ENCODE measurements at regions of chr16 and their contacts with region 1.

Region 1: DNA sequence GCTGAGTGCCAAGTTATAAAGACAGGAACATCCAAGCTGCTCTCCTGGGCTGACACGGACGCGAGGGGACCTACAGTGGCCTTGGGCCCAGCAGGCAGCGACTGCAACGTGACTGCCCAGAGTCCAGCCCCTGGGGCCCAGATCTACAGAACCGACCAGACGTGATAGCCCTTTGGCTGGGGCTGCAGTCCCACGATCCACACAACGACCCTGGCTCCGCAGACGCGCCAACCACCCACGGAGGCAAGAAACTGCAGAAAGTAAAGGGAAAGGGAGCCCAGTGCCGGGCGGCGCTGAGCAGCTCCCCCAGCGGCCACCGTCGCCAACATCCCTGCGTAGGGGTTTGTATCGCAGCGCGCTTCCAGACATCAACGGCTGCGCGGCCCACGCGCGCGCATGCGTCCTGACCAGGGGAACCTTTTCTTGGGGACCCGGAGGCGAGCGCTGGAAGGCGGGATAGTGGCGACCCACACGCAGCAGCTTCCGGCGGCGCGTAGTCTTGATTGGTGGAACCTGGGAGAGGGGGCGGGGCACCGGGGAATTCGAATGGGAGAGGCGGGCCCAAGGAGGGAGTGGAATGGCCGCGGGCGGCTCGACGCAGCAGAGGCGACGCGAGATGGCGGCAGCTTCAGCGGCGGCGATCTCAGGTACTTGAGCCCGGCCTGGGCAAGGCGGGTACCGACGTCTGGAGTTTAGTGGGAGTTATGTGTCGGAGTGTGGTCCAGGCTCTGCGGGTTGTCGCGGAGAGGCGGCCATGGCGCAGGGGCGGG is at the start of gene KIF22:
- DNase-seq: peak; percentile 99 to 100 (median 100)
- H3K4me3 ChIP-seq: peak within 1 kb of the TSS; percentile 95
- H3K4me3 Mint-ChIP-seq: peak within 1 kb of the TSS; percentile 94 to 99 (median 99)
- H3K27ac ChIP-seq: peak within 1 kb of the TSS; percentile 85
- H3K27ac Mint-ChIP-seq: peak within 1 kb of the TSS; percentile 94 to 99 (median 98)
- H3K4me1 ChIP-seq: peaks cover 43% of the 10 kb centered on the region
- H3K4me1 Mint-ChIP-seq: peaks cover 40 to 61% (median 47%) of the 10 kb centered on the region in 3 donors
- H3K27me3 ChIP-seq: no peaks in the 10 kb centered on the region
- H3K27me3 Mint-ChIP-seq: peaks cover 0 to 4% of the 10 kb centered on the region in 2 donors
- total RNA-seq, gene KIF22: 118 to 131 TPM

Region 2: DNA sequence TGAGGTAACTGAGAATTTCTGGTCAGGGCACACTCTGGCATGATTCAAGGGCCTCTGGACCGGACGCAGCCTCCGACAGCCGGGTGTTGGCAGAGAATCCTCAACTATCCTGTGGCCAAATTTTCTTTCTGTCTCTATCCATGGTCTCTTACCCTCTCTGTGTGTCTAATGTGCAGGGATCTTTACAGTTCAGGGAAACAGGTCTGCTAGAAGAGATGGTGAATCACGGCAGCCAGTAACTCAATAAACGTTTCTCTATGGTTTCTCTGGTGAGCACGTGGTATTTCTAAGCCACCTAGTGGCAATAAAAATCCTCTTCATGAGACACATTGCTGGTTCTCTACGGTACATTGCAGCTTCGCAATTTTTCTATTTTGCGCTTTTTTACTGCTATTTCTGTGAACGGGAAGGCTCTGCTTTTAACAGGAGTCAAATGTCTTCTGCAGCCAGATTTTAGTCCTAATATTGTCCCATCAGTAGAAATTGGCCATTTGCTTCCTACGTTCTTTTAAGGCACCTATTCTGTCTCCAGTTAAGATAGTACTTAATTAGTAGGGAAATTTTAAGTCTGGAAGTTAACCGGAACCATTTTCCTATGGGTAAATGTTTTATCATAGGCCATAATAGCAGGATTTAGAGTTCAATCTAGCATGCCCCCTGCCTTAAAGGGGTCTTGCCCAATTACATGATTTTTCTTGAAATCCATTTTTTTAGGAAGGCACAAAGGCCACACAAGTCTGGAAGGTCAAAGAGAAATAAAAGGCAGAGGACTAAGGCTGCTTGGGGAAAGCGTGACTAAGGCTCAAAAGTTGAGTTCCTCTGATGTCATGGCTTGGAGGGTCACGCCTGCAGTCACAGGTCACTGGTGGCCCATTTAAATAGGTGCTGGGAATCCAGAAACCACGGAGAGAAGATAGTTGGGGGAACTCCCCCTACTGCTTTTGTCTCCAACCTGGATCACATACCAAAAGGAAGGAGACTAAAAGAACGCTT is 79.8 kb before region 1 on chr16:
- CTCF ChIA-PET with region 1: interaction called, 12 read pairs
- POLR2A ChIA-PET with region 1: interaction called, 4 read pairs
- DNase-seq: peak in 3 of 5 donors; percentile 57 to 65 (median 58)
- H3K4me3 ChIP-seq: no peak overlapping the region
- H3K4me3 Mint-ChIP-seq: no peak overlapping the region
- H3K27ac ChIP-seq: no peak overlapping the region
- H3K27ac Mint-ChIP-seq: peak overlapping the region in 6 of 8 donors; percentile 7 to 93 (median 84)
- H3K4me1 ChIP-seq: peaks cover 11% of the 10 kb centered on the region
- H3K4me1 Mint-ChIP-seq: peaks cover 12 to 17% (median 14%) of the 10 kb centered on the region in 3 donors
- H3K27me3 ChIP-seq: no peaks in the 10 kb centered on the region
- H3K27me3 Mint-ChIP-seq: peaks cover 0 to 1% of the 10 kb centered on the region in 2 donors

Region 3: DNA sequence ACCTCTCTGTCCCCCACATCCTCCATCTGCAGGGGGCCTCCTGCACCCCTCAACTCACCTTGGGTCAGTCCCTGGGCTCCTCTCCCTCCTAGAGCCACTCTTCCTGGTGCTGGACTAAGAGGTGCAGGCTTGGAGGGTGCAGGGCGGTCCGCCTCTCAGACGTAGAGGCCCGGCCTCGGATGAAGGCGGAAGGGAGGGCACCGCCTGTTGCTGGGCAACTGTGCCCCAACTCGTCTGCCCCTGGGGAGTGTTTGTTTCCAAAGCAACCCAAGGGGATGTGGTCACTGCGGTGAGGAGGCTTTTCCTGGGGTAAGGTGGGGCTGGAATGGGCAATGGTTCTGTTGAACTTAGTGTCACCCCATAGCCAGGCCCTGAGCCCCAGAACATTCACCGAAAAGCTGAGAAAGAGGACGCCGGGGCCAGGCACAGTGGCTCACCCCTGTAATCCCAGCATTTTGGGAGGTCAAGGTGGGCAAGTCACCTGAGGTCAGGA is 44.5 kb before region 1 on chr16 and contains the start of gene C16orf54:
- CTCF ChIA-PET with region 1: interaction called, 16 read pairs
- POLR2A ChIA-PET with region 1: interaction called, 28 read pairs
- DNase-seq: peak; percentile 89 to 99 (median 98)
- H3K4me3 ChIP-seq: peak within 1 kb of the TSS; percentile 86
- H3K4me3 Mint-ChIP-seq: peak within 1 kb of the TSS; percentile 96 to 100 (median 99)
- H3K27ac ChIP-seq: peak within 1 kb of the TSS; percentile 97
- H3K27ac Mint-ChIP-seq: peak within 1 kb of the TSS; percentile 98 to 100 (median 100)
- H3K4me1 ChIP-seq: peaks cover 65% of the 10 kb centered on the region
- H3K4me1 Mint-ChIP-seq: peaks cover 57 to 70% (median 61%) of the 10 kb centered on the region in 3 donors
- H3K27me3 ChIP-seq: no peaks in the 10 kb centered on the region
- H3K27me3 Mint-ChIP-seq: peaks cover 0 to 5% of the 10 kb centered on the region in 2 donors
- total RNA-seq, gene C16orf54: 32.3 to 33.3 TPM

Region 4: DNA sequence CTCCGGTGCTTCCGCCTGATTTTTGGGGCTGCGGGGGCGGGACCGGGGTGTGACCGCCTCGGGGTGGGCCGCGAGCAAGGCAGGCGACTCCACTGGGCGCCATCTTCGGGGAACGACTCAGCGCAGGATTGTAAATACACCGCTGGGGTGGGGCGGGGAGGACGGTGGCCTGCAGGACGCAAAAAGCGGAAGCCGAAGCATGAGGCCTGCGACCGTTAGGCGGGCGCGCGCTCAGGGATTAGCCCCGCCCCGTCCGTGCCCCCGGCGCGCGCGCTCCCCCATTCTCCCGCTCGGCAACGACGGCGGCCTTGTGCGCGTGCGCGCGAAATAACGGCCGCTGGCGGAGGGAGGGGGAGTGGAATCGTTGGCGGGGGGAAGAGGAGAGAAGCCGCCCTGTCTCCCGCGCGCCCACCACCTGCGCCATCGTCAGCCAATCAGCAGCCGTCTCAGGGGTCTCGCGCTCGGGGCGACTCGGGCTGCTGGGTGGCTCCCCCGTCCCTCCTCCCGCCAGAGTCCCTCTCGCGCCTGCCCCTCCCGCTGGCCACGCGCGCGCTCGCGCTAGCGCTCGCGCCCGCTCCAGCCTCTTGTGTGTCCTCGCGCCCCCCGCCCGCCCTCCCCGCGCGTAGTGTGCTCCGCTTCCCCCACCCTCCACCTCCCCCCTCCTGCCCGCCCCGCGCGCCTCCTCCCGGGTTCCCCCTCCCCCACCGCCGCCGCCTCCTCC is 15.2 kb after region 1 on chr16:
- CTCF ChIA-PET with region 1: interaction called, 42 read pairs
- POLR2A ChIA-PET with region 1: interaction called, 59 read pairs
- DNase-seq: peak; percentile 97 to 99 (median 97)
- H3K4me3 ChIP-seq: peak overlapping the region; percentile 87
- H3K4me3 Mint-ChIP-seq: peak overlapping the region; percentile 93 to 100 (median 98)
- H3K27ac ChIP-seq: peak overlapping the region; percentile 95
- H3K27ac Mint-ChIP-seq: peak overlapping the region; percentile 94 to 100 (median 99)
- H3K4me1 ChIP-seq: peaks cover 36% of the 10 kb centered on the region
- H3K4me1 Mint-ChIP-seq: peaks cover 41 to 47% (median 47%) of the 10 kb centered on the region in 3 donors
- H3K27me3 ChIP-seq: no peaks in the 10 kb centered on the region
- H3K27me3 Mint-ChIP-seq: peaks cover 0 to 4% of the 10 kb centered on the region in 2 donors

Region 5: GRCh38 chr16:29848420-29849297 is 58.3 kb after region 1 on chr16:
- CTCF ChIA-PET with region 1: interaction called, 21 read pairs
- POLR2A ChIA-PET with region 1: interaction called, 7 read pairs
- DNase-seq: peak; percentile 66 to 84 (median 74)
- H3K4me3 ChIP-seq: no peak overlapping the region
- H3K4me3 Mint-ChIP-seq: no peak overlapping the region
- H3K27ac ChIP-seq: no peak overlapping the region
- H3K27ac Mint-ChIP-seq: peak overlapping the region; percentile 45 to 68 (median 56)
- H3K4me1 ChIP-seq: no peaks in the 10 kb centered on the region
- H3K4me1 Mint-ChIP-seq: peaks cover 3 to 8% (median 5%) of the 10 kb centered on the region in 3 donors
- H3K27me3 ChIP-seq: no peaks in the 10 kb centered on the region
- H3K27me3 Mint-ChIP-seq: no peaks in the 10 kb centered on the region

Region 6: GRCh38 chr16:29877266-29877961 is 87.0 kb after region 1 on chr16:
- CTCF ChIA-PET with region 1: no interaction called
- POLR2A ChIA-PET with region 1: no interaction called
- DNase-seq: peak in 3 of 5 donors; percentile 15 to 31 (median 29)
- H3K4me3 ChIP-seq: peak overlapping the region; percentile 26
- H3K4me3 Mint-ChIP-seq: peak overlapping the region; percentile 9 to 83 (median 73)
- H3K27ac ChIP-seq: no peak overlapping the region
- H3K27ac Mint-ChIP-seq: peak overlapping the region in 2 of 8 donors; percentile 31 to 51
- H3K4me1 ChIP-seq: peaks cover 12% of the 10 kb centered on the region
- H3K4me1 Mint-ChIP-seq: peaks cover 13 to 20% (median 18%) of the 10 kb centered on the region in 3 donors
- H3K27me3 ChIP-seq: peaks cover 13% of the 10 kb centered on the region
- H3K27me3 Mint-ChIP-seq: peaks cover 24 to 38% of the 10 kb centered on the region in 2 donors